ENCODE measurements at regions of chr6 and their contacts with region 1.

Region 1: GRCh38 chr6:45922728-45923351 is 92.8 kb downstream of the CLIC5 start:
- DNase-seq: peak; percentile 90
- H3K4me3 Mint-ChIP-seq: peak overlapping the region; percentile 10
- H3K27ac Mint-ChIP-seq: peak overlapping the region; percentile 89
- H3K4me1 Mint-ChIP-seq: peaks cover 46% of the 10 kb centered on the region
- H3K27me3 Mint-ChIP-seq: no peaks in the 10 kb centered on the region

Region 2: GRCh38 chr6:44642870-44643529 is 1279.8 kb before region 1 on chr6:
- intact Hi-C with region 1: loop called (anchors 5 kb)
- DNase-seq: peak; percentile 74
- H3K4me3 Mint-ChIP-seq: peak overlapping the region; percentile 7
- H3K27ac Mint-ChIP-seq: peak overlapping the region; percentile 84
- H3K4me1 Mint-ChIP-seq: peaks cover 17% of the 10 kb centered on the region
- H3K27me3 Mint-ChIP-seq: no peaks in the 10 kb centered on the region

Region 3: DNA sequence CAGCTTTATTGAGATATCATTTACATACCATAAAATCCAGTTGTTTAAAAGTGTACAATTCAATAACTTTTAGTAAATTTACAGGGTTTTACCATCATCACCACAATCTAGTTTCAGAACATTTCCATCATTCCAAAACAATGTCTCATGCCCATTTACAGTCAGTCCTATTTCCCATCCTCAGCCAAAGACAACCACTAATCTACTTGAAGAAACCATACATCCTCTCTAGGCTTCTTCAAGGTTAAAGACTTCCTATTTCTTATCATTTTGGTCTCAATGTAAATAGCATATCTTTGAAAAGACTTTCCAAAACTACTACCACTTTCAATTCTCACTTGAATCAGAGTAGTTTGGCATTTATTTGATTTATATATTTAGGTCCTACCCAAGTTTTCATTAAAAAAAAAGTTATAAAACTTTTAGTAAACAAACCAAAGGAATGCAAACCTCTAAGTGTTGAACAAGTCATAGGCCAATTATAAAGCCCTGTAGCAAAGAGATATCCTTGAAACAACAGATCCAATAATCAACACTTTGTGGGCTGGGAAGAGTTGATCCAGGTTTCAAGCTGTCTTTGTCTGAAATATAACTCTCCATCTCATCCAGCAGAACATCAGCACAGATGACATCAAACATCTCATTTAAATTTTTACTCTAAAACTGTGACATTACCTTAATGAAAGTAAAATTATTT is 806.0 kb before region 1 on chr6:
- intact Hi-C with region 1: loop called (anchors 5 kb)
- DNase-seq: no peak
- H3K4me3 Mint-ChIP-seq: peak overlapping the region; percentile 2
- H3K27ac Mint-ChIP-seq: peak overlapping the region; percentile 17
- H3K4me1 Mint-ChIP-seq: peaks cover 18% of the 10 kb centered on the region
- H3K27me3 Mint-ChIP-seq: no peaks in the 10 kb centered on the region

Region 4: GRCh38 chr6:45436544-45437438 is 486.0 kb before region 1 on chr6:
- intact Hi-C with region 1: loop called (anchors 5 kb)
- DNase-seq: peak; percentile 75
- H3K4me3 Mint-ChIP-seq: peak overlapping the region; percentile 79
- H3K27ac Mint-ChIP-seq: peak overlapping the region; percentile 91
- H3K4me1 Mint-ChIP-seq: peaks cover 60% of the 10 kb centered on the region
- H3K27me3 Mint-ChIP-seq: no peaks in the 10 kb centered on the region

Region 5: GRCh38 chr6:45626087-45626891 is 296.6 kb before region 1 on chr6:
- intact Hi-C with region 1: loop called (anchors 2 kb)
- DNase-seq: no peak
- H3K4me3 Mint-ChIP-seq: peak overlapping the region; percentile 3
- H3K27ac Mint-ChIP-seq: peak overlapping the region; percentile 82
- H3K4me1 Mint-ChIP-seq: peaks cover 39% of the 10 kb centered on the region
- H3K27me3 Mint-ChIP-seq: no peaks in the 10 kb centered on the region

Region 6: DNA sequence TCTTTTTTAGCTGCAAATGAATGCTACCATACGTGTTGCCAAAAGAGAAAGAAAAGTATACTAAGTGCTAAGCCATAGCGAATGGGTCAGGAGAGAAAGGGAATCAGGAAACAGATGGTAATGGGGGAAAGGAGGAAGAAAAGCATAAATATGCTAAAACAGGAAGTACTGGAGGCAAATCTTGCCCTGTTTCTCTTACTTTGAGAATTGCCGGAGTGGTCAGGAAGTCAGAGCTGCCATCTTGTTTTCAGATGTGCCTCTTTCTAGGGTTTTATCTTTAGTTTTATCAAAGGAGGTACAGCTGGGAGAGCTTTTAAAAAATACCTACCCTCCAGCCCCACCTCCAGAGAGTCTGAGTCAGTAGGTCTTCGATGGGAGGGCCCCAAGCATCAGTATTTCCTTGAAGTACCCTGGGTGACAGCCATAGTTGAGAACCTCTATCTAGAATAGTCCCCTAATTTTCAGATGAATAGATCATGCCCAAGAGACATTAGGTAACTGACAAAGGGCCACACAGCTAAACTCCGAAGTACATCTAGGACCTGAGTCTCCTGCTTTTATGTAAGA is 100.5 kb before region 1 on chr6:
- intact Hi-C with region 1: loop called (anchors 2 kb)
- DNase-seq: no peak
- H3K4me3 Mint-ChIP-seq: peak overlapping the region; percentile 44
- H3K27ac Mint-ChIP-seq: peak overlapping the region; percentile 71
- H3K4me1 Mint-ChIP-seq: peaks cover 24% of the 10 kb centered on the region
- H3K27me3 Mint-ChIP-seq: no peaks in the 10 kb centered on the region

Region 7: GRCh38 chr6:46072866-46073265 is 150.0 kb after region 1 on chr6:
- intact Hi-C with region 1: no loop called
- DNase-seq: no peak
- H3K4me3 Mint-ChIP-seq: no peak overlapping the region
- H3K27ac Mint-ChIP-seq: no peak overlapping the region
- H3K4me1 Mint-ChIP-seq: peaks cover 2% of the 10 kb centered on the region
- H3K27me3 Mint-ChIP-seq: peaks cover 15% of the 10 kb centered on the region